Sigmoid colon (tissue), 7 donors: ENCODE measurements at regions of chr19 and their contacts with region 1.

Region 1: DNA sequence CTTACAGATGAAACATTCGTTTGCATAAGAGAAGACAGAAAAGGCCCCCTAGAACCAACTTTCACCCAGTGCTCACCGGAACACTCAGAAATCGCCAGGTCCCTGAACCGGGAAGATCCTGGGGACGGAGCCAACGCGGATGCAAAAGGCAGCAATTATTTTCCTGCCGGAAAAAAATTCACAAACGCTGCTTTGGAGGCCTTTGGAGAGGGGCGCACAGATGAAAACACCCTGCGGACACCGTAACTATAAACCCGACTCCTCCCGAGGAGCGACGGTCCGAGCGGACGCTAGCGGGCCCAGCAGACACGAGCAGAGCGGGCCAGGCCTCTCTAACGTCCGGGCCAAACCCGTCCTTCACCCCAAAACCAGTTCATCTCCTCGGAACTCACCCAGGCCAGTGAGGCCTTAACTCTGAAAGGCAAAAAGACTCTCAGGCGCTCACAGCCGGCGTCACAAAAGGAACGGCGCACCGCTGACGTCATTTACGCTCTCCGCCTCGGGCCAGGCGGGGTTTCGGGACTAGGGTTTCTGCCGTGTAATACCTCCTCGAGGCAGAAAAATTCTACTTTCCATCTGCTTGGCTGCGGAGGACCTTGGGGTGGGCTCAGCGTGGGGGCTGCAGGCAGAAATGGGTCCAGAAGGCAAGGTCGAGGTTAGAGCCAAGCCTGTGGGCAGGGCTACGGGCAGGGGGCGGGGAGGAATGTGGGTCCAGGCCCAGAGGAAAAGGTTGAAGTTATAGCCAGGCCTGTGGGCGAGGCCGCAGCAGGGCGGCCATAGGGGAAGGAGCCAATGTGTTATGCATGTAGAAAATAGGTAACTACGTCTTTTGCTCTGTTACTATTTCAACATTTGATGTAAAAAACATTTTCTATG is at the start of gene ZNF426:
- DNase-seq: peak; percentile 93
- H3K4me3 ChIP-seq: peak within 1 kb of the TSS; percentile 54 to 76 (median 72)
- H3K27ac ChIP-seq: peak within 1 kb of the TSS; percentile 91 to 95 (median 92)
- H3K4me1 ChIP-seq: peaks cover 0 to 18% (median 10%) of the 10 kb centered on the region in 4 donors
- H3K27me3 ChIP-seq: no peaks in the 10 kb centered on the region
- CTCF ChIP-seq: no peak
- EP300 ChIP-seq: no peak
- POLR2A ChIP-seq: peak in 1 of 2 donors; percentile 5
- total RNA-seq, gene ZNF426: 11.4 to 18.1 (median 12.7) TPM

Region 2: DNA sequence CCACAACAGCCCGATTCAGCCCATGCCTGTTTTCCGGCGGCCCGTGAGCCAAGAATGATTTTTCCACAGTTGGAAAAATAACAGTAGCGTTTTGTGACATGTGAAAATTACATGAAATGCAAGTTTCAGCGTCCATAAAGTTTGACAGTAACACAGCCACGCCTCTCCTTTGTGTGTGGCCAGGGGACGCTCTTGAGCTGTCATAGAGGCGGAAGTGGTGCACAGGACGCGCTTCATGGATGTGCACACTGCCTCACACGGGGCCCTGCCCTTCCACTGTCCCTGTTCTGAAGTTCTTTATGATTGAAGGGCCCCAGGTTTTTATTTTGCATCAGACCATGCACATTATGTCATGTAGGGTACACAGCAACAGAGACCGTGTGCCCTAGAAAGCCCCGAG is 1520.6 kb before region 1 on chr19:
- intact Hi-C with region 1: no loop called
- DNase-seq: no peak
- H3K4me3 ChIP-seq: no peak overlapping the region
- H3K27ac ChIP-seq: no peak overlapping the region
- H3K4me1 ChIP-seq: no peaks in the 10 kb centered on the region
- H3K27me3 ChIP-seq: no peaks in the 10 kb centered on the region
- CTCF ChIP-seq: no peak
- EP300 ChIP-seq: no peak
- POLR2A ChIP-seq: no peak

Region 3: DNA sequence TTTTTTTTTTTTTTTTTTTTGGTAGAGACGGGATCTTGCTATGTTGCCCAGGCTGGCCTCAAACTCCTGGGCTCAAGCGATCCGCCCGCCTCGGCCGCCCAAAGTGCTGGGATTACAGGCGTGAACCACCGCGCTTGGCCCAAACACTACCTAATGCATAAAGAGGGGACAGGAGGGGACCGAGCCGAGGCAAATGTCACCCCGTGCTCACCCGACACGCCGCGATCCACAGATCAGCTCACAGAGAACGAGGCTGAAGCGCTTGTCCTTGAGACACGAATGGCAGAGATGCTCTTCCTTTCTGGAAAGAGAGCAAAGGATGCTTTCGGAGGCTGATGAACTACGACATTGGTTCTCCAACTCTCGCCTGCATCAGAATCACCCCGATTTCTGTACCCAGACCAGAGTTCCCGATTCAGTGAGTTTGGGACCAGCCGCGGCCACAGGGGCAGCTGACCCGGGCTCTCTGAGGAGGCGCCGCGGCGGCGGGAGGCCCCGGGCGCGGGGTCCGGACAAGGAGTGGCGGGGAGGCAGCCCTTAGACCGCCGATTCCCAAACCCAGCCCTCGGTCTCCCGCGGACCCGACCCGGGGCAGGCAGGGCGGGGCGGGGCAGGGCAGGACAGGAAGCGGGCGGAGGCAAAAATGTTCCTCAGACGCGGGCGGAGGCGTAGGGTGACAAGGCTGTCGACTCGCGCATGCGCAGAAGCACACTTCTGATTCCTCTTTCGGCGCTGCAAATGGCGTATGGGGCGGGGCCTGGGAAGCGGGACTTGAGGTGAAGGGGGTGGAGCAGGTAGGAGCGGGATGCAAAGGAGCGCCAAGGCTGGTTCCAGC is 229.1 kb before region 1 on chr19 and contains the start of gene ZNF699:
- intact Hi-C with region 1: loop called (anchors 5 kb)
- DNase-seq: peak; percentile 99
- H3K4me3 ChIP-seq: peak within 1 kb of the TSS; percentile 68 to 94 (median 84)
- H3K27ac ChIP-seq: peak within 1 kb of the TSS; percentile 91 to 98 (median 96)
- H3K4me1 ChIP-seq: peaks cover 0 to 21% (median 13%) of the 10 kb centered on the region in 4 donors
- H3K27me3 ChIP-seq: no peaks in the 10 kb centered on the region
- CTCF ChIP-seq: no peak
- EP300 ChIP-seq: peak in 1 of 4 donors; percentile 4
- POLR2A ChIP-seq: peak; percentile 33 to 63
- total RNA-seq, gene ZNF699: 3.1 to 23.7 (median 11.9) TPM

Region 4: GRCh38 chr19:9461938-9462337 is 76.5 kb before region 1 on chr19:
- intact Hi-C with region 1: no loop called
- DNase-seq: no peak
- H3K4me3 ChIP-seq: no peak overlapping the region
- H3K27ac ChIP-seq: no peak overlapping the region
- H3K4me1 ChIP-seq: no peaks in the 10 kb centered on the region
- H3K27me3 ChIP-seq: no peaks in the 10 kb centered on the region
- CTCF ChIP-seq: no peak
- EP300 ChIP-seq: no peak
- POLR2A ChIP-seq: no peak